Adrenal gland (tissue), 19 donors: ENCODE measurements at regions of chr9 and their contacts with region 1.

Region 1: DNA sequence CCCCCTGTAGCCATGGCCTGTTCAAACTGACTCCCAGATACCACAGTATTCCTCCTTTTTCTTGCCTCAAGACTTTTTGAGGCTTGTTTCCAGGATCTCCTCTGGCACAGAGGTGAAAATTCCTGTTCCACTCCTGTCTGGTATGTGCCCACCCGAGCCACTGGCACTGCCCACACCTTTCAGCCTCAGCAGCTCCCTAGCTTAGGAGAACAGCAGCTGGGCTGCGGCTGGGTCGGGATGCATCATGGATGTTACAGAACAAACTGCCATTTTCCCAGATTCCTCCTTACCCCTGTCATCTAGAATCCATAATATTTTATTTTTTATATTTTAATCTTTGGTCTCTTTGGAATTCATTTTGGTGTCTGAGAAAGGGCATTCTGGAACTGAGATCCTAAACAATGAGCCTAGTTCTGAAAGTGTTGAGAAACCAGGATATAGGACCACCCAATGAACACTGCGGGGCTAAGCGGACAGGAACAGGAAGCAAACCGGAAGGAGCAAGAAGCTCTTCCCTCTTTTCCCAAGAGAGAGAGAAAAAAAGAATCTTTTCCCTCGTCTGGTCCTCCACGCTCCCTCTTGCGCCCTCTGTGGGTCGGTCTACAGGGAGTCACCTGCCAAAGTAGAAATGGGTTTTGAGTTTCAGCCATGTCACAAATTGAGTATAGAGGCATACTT is 12.5 kb downstream of the OR2S2 start:
- DNase-seq: peak; percentile 78 to 89 (median 83)
- H3K4me3 ChIP-seq: peak overlapping the region in 1 of 4 donors; percentile 32
- H3K27ac ChIP-seq: no peak overlapping the region
- H3K4me1 ChIP-seq: peaks cover 0 to 5% of the 10 kb centered on the region in 2 donors
- H3K27me3 ChIP-seq: no peaks in the 10 kb centered on the region
- CTCF ChIP-seq: peak; percentile 72 to 91 (median 84)
- POLR2A ChIP-seq: no peak

Region 2: DNA sequence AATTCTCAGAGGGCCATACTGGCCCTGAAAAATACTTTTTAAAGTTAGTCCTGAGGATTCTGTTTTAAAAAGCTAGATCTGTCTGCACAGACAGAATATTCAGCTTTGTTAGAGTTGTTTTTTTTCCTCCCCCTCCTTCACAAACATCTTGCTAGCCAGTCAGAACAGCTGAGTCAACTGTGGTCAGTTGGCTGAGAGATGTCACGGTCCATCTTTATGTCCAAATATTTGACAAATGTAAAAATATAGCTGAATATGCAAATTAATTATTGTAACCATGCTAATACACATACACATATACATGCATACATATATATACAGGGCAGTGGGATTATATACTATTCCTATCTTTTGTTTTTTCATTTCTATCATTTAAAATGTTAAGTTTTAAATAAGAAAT is 749.8 kb before region 1 on chr9:
- intact Hi-C with region 1: no loop called
- DNase-seq: no peak
- H3K4me3 ChIP-seq: no peak overlapping the region
- H3K27ac ChIP-seq: no peak overlapping the region
- H3K4me1 ChIP-seq: no peaks in the 10 kb centered on the region
- H3K27me3 ChIP-seq: no peaks in the 10 kb centered on the region
- CTCF ChIP-seq: no peak
- POLR2A ChIP-seq: no peak

Region 3: GRCh38 chr9:35903049-35903448 is 42.4 kb before region 1 on chr9:
- intact Hi-C with region 1: loop called (anchors 2 to 5 kb)
- DNase-seq: peak in 2 of 7 donors; percentile 49 to 55
- H3K4me3 ChIP-seq: no peak overlapping the region
- H3K27ac ChIP-seq: no peak overlapping the region
- H3K4me1 ChIP-seq: peaks cover 18 to 31% of the 10 kb centered on the region in 2 donors
- H3K27me3 ChIP-seq: peaks cover 8% of the 10 kb centered on the region
- CTCF ChIP-seq: peak; percentile 67 to 87 (median 80)
- POLR2A ChIP-seq: no peak